ENCODE measurements at regions of chr16 and their contacts with region 1.

Region 1: GRCh38 chr16:8063159-8063558 is 527.2 kb downstream of the TMEM114 start:
- DNase-seq: no peak
- ATAC-seq: no peak
- H3K4me3 ChIP-seq: no peak overlapping the region
- H3K27ac ChIP-seq: no peak overlapping the region
- H3K4me1 ChIP-seq: no peaks in the 10 kb centered on the region
- H3K27me3 ChIP-seq: no peaks in the 10 kb centered on the region
- CTCF ChIP-seq: no peak
- EP300 ChIP-seq: no peak
- POLR2A ChIP-seq: no peak
- RAD21 ChIP-seq: no peak

Region 2: DNA sequence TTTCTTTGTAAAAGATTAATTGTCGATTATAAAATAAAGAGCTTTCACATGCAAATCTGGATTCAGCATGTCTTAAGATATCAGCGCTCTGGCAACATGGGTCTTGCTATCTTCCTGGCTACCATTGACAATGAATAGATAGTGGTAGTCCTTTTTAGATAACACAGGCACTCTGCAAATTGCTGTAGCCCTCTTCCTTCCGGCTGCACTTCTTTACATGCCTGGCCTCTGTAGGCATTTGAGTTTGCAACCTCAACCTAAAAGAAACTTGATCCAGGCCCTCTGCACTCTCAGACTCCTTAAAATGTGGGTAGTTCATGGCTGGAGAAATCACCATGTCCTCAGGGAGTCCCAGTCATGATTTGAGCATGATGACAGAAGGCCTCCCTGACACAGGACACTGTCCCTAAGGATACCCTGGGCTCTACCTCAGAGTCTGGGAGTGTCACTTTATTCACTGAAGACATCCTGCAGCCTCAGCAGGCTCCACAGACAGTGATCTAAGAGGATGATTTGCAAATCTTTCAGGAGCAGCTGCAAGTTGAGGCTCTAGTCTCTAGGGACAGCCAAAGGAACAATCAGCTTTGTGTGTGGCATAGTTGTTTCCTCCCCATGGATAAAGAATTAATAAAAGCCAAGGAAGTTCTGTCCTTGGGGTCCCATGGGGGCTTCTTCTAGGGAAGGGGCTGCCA is 201.1 kb before region 1 on chr16:
- CTCF ChIA-PET with region 1: no interaction called
- POLR2A ChIA-PET with region 1: no interaction called
- RAD21 ChIA-PET with region 1: no interaction called
- SMC1A ChIA-PET with region 1: no interaction called
- in situ Hi-C with region 1: no loop called
- intact Hi-C with region 1: no loop called
- DNase-seq: no peak
- ATAC-seq: no peak
- H3K4me3 ChIP-seq: no peak overlapping the region
- H3K27ac ChIP-seq: no peak overlapping the region
- H3K4me1 ChIP-seq: no peaks in the 10 kb centered on the region
- H3K27me3 ChIP-seq: no peaks in the 10 kb centered on the region
- CTCF ChIP-seq: no peak
- EP300 ChIP-seq: no peak
- POLR2A ChIP-seq: no peak
- RAD21 ChIP-seq: no peak

Region 3: GRCh38 chr16:8127070-8127469 is 63.9 kb after region 1 on chr16:
- CTCF ChIA-PET with region 1: no interaction called
- POLR2A ChIA-PET with region 1: no interaction called
- RAD21 ChIA-PET with region 1: no interaction called
- SMC1A ChIA-PET with region 1: no interaction called
- in situ Hi-C with region 1: loop called (anchors 10 kb)
- intact Hi-C with region 1: no loop called
- DNase-seq: no peak
- ATAC-seq: no peak
- H3K4me3 ChIP-seq: no peak overlapping the region
- H3K27ac ChIP-seq: no peak overlapping the region
- H3K4me1 ChIP-seq: no peaks in the 10 kb centered on the region
- H3K27me3 ChIP-seq: no peaks in the 10 kb centered on the region
- CTCF ChIP-seq: no peak
- EP300 ChIP-seq: no peak
- POLR2A ChIP-seq: no peak
- RAD21 ChIP-seq: no peak